Dendritic cell treated with granulocyte-macrophage colony-stimulating factor and Interleukin-4, amounts not matched to agents 40 ng/mL and 50 ng/mL, for 4 days (primary cell): ENCODE measurements at regions of chr2 and their contacts with region 1.

Region 1: DNA sequence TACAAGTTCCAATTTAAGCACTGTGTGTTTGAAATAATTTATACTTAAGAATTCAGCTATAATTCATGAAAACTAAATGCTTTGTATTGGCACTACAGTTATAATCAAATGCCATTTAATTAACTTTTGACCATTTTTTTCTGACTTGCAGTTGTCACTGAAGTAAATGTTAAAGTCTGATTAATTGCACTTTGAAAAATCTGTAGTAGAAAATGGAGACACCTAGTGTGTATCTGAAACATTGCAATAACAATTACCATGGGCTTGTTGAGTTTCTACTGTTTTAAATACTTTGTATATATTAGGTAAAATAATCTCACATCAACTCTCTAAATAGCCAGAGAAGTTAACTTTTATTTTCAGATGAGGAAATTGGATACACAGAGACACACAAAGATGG is 458.6 kb upstream of the FSIP2 start:
- H3K4me3 Mint-ChIP-seq: no peak overlapping the region
- H3K27ac Mint-ChIP-seq: no peak overlapping the region
- H3K4me1 Mint-ChIP-seq: no peaks in the 10 kb centered on the region
- H3K27me3 Mint-ChIP-seq: no peaks in the 10 kb centered on the region

Region 2: GRCh38 chr2:184611361-184612085 is 668.5 kb before region 1 on chr2:
- intact Hi-C with region 1: loop called (anchors 5 kb)
- H3K4me3 Mint-ChIP-seq: no peak overlapping the region
- H3K27ac Mint-ChIP-seq: no peak overlapping the region
- H3K4me1 Mint-ChIP-seq: peaks cover 18% of the 10 kb centered on the region
- H3K27me3 Mint-ChIP-seq: no peaks in the 10 kb centered on the region

Region 3: DNA sequence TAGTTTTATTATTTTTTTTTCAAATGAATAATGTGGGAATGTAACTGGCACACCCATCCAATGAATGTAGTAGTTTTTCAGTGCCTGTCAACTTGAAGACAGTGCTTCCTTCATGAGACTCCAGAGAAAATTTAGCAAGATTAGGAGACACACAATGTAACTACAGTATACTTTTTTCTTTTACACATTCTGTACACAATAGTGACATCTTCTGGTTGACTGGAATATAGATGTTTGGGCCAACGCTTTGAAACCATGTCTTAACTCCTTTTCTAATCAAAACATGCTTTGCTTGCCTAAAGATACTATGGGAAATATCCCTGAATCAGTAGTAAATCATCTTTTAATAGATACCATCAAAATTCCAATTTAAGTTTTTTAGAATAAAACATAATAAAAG is 976.5 kb after region 1 on chr2:
- intact Hi-C with region 1: loop called (anchors 10 kb)
- H3K4me3 Mint-ChIP-seq: no peak overlapping the region
- H3K27ac Mint-ChIP-seq: no peak overlapping the region
- H3K4me1 Mint-ChIP-seq: no peaks in the 10 kb centered on the region
- H3K27me3 Mint-ChIP-seq: no peaks in the 10 kb centered on the region